Heart left ventricle (tissue), 16 donors: ENCODE measurements at regions of chr2 and their contacts with region 1.

Region 1: GRCh38 chr2:86592547-86593230 is 29.4 kb upstream of the CHMP3 start:
- DNase-seq: peak in 1 of 5 donors; percentile 21
- ATAC-seq: peak in 1 of 4 donors; percentile 52
- H3K4me3 ChIP-seq: no peak overlapping the region
- H3K27ac ChIP-seq: peak overlapping the region in 9 of 12 donors; percentile 14 to 79 (median 51)
- H3K4me1 ChIP-seq: peaks cover 0 to 32% (median 2%) of the 10 kb centered on the region in 12 donors
- H3K27me3 ChIP-seq: no peaks in the 10 kb centered on the region
- CTCF ChIP-seq: no peak
- POLR2A ChIP-seq: no peak

Region 2: GRCh38 chr2:86533589-86533988 is 59.1 kb before region 1 on chr2:
- intact Hi-C with region 1: loop called in 1 of 10 experiments (anchors 2 kb)
- DNase-seq: no peak
- ATAC-seq: no peak
- H3K4me3 ChIP-seq: no peak overlapping the region
- H3K27ac ChIP-seq: no peak overlapping the region
- H3K4me1 ChIP-seq: no peaks in the 10 kb centered on the region
- H3K27me3 ChIP-seq: no peaks in the 10 kb centered on the region
- CTCF ChIP-seq: no peak
- POLR2A ChIP-seq: no peak